PC-9 (cell line): ENCODE measurements at regions of chr1 and their contacts with region 1.

Region 1: DNA sequence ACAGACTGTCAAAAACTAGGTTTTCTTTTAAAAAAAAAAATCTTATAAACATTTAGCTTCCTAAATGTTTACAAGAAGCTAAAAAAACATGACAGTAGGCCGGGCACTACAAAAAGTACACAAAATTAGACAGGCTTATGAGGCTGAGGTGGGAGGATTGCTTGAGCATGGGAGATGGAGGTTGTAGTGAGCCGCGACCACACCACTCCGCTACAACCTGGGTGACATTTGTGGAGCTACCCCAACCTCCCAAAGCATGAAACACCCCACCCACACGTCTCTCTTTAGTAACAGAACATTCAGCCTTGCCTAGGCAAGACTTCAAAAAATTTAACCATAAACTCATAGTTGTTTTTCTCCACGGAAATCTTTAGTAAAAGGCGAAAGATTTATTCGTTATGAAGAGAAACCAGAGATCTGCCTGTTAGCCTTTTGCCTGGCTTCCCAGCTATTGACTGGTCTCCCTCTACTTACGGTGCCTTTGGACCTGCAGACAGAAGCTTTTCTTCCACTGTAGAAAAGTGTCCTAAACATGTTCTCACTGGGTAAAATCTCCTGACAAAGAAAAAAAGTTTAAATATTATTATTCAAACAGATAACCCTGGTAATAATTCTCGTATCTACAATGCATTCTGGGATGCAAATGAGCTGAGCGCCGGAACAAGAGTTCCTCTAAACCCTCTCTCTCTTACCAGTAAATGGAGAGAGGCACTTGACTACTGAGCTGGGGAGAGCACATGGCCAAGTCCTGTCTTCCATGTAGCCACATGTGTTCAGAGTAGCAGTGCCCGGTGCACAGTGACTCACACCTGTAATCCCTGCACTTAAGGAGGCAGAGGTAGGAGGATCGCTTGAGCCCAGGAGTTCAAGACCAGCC is 9.2 kb downstream of the RNU5D-1 start:
- DNase-seq: peak; percentile 70 to 97
- H3K4me3 ChIP-seq: peak overlapping the region; percentile 21; the same call in 1 of the 2 replicates
- H3K27ac ChIP-seq: peak overlapping the region; percentile 89
- H3K4me1 ChIP-seq: peaks cover 26% of the 10 kb centered on the region
- H3K27me3 ChIP-seq: no peaks in the 10 kb centered on the region
- CTCF ChIP-seq: no peak

Region 2: GRCh38 chr1:44485229-44485933 is 236.3 kb before region 1 on chr1:
- CTCF ChIA-PET with region 1: no interaction called
- POLR2A ChIA-PET with region 1: no interaction called
- intact Hi-C with region 1: no loop called
- DNase-seq: peak in 1 of 2 experiments; percentile 30
- H3K4me3 ChIP-seq: no peak overlapping the region
- H3K27ac ChIP-seq: peak overlapping the region; percentile 54
- H3K4me1 ChIP-seq: peaks cover 22% of the 10 kb centered on the region
- H3K27me3 ChIP-seq: no peaks in the 10 kb centered on the region
- CTCF ChIP-seq: no peak

Region 3: DNA sequence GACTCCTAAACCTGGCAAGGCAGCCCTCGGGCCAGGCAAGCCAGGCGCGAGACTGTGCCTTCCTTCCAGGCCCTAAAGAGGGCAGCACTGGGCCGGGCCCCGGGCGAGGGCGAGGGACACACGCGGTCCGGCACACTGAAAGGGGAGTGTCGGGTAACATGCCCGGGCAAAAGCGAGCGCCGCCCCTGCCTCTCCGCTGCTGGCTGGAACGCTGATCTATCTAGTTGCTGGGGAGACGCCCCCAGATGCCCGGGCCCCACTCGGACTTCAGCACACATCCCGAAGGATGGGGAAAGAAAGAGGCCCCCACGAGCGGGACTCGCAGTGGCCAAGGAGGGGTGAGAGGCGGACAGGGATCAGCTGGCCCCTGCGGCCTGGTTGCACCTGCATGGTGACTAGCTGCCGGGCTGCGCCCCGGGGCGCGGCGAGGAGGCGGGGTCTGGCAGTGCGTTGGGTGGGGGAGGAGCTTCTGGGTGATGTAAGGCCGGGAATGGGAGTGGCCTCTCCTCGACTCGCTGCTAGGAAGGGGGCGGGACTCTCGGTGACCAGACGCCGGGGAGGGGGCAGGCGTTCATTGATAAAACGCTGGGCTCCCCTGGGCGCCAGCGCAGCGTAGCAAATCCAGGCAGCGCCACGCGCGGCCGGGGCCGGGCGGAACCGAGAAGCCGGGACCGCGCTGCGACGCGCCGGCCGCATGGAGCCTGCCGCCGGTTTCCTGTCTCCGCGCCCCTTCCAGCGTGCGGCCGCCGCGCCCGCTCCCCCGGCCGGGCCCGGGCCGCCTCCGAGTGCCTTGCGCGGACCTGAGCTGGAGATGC is 78.3 kb after region 1 on chr1 and contains the start of gene PLK3:
- CTCF ChIA-PET with region 1: interaction called, 13 read pairs
- POLR2A ChIA-PET with region 1: no interaction called
- intact Hi-C with region 1: no loop called
- DNase-seq: peak; percentile 88 to 99
- H3K4me3 ChIP-seq: peak within 1 kb of the TSS; percentile 82
- H3K27ac ChIP-seq: peak within 1 kb of the TSS; percentile 81
- H3K4me1 ChIP-seq: peaks cover 45% of the 10 kb centered on the region
- H3K27me3 ChIP-seq: no peaks in the 10 kb centered on the region
- CTCF ChIP-seq: peak; percentile 88
- total RNA-seq, gene PLK3: 12.7 and 13.0 TPM in 2 replicates

Region 4: DNA sequence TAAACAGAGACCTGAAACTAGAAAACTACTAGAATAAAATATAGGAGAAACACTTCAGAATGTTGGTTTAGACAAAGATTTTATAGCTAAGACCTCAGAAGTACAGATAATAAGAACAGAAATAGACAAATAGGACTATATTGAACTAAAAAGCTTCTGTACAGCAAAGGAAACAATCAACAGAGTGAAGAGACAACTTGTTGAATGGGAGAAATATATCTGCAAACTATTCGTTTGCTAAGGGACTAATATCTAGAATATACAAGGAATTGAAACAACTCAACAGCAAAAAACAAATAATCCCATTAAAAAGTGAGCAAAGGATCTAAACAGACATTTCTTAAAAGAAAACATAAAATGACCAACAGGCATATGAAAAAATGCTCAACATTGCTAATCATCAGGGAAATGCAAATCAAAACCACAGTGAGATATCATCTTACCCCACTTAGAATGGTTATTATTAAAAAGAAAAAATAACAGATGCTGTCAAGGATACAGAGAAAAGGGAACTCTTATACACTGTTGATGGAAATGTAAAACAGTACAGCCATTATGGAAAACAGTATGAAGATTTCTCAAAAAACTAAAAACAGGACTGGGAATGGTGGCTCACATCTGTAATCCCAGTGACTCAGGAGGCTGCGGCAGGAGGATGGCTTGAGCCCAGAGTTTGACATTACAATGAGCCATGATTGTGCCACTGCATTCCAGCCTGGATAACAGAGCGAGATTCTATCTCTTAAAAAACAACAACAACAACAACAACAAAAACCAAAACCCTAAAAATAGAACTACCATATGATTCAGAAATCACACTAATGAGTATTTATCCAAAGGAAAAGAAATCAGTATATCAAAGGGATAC is 522.0 kb after region 1 on chr1:
- CTCF ChIA-PET with region 1: no interaction called
- POLR2A ChIA-PET with region 1: interaction called, 11 read pairs
- intact Hi-C with region 1: no loop called
- DNase-seq: no peak
- H3K4me3 ChIP-seq: no peak overlapping the region
- H3K27ac ChIP-seq: no peak overlapping the region
- H3K4me1 ChIP-seq: peaks cover 12% of the 10 kb centered on the region; the same call in 1 of the 2 replicates
- H3K27me3 ChIP-seq: no peaks in the 10 kb centered on the region
- CTCF ChIP-seq: no peak